ENCODE measurements at regions of chr5 and their contacts with region 1.

Region 1: GRCh38 chr5:50286902-50287301 is 154.2 kb downstream of the EMB start:
- DNase-seq: no peak
- ATAC-seq: no peak
- H3K4me3 ChIP-seq: no peak overlapping the region
- H3K27ac ChIP-seq: no peak overlapping the region
- H3K4me1 ChIP-seq: no peaks in the 10 kb centered on the region
- H3K27me3 ChIP-seq: no peaks in the 10 kb centered on the region
- CTCF ChIP-seq: no peak
- POLR2A ChIP-seq: no peak
- RAD21 ChIP-seq: no peak

Region 2: DNA sequence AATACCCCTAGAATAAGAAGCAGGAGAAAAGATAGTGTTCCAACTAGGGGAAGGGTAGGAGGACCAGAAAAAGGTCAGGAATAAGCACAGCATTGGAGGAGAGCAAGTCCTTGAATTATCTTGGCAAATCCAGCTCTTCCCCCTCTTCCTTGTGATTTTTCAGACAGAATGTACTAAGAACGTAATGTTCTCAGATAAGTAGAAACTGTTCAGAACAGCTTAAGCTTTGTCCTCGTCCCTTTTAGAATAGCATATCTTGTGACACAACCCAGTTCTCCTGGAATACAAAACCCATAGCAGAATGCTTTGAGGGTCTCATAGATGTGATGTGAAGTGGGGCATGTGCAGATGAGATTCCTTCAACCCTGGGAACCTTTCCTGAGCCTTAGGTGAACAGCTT is 56.8 kb after region 1 on chr5:
- CTCF ChIA-PET with region 1: no interaction called
- POLR2A ChIA-PET with region 1: no interaction called
- dilution Hi-C with region 1: no loop called
- in situ Hi-C with region 1: no loop called
- intact Hi-C with region 1: loop called (anchors 10 kb)
- DNase-seq: no peak
- ATAC-seq: no peak
- H3K4me3 ChIP-seq: no peak overlapping the region
- H3K27ac ChIP-seq: no peak overlapping the region
- H3K4me1 ChIP-seq: no peaks in the 10 kb centered on the region
- H3K27me3 ChIP-seq: no peaks in the 10 kb centered on the region
- CTCF ChIP-seq: no peak
- POLR2A ChIP-seq: no peak
- RAD21 ChIP-seq: no peak

Region 3: GRCh38 chr5:50751064-50751657 is 464.3 kb after region 1 on chr5:
- CTCF ChIA-PET with region 1: no interaction called
- POLR2A ChIA-PET with region 1: no interaction called
- dilution Hi-C with region 1: no loop called
- in situ Hi-C with region 1: no loop called
- intact Hi-C with region 1: no loop called
- DNase-seq: peak; percentile 55
- ATAC-seq: peak; percentile 86
- H3K4me3 ChIP-seq: no peak overlapping the region
- H3K27ac ChIP-seq: no peak overlapping the region
- H3K4me1 ChIP-seq: no peaks in the 10 kb centered on the region
- H3K27me3 ChIP-seq: no peaks in the 10 kb centered on the region
- CTCF ChIP-seq: peak; percentile 79
- POLR2A ChIP-seq: no peak
- RAD21 ChIP-seq: peak; percentile 84

Region 4: DNA sequence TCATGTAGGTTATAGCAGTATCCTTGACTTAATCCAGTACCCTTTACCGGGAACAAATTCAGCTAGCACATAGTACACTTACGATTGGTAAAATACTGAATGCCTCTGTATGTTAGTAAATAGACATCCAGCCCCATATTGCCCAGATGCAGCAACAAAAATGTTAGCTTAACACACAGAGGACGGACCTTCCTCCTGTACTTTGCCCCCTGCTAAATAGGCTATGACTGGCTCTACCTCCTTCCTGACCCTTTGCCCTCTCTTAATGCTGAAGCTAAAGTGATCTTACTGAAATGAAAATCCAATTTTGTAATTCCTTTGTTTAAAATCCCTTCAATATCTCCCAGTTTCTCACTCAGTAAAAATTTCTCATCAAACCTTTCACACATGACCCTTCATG is 562.7 kb after region 1 on chr5:
- CTCF ChIA-PET with region 1: no interaction called
- POLR2A ChIA-PET with region 1: no interaction called
- dilution Hi-C with region 1: no loop called
- in situ Hi-C with region 1: no loop called
- intact Hi-C with region 1: no loop called
- DNase-seq: no peak
- ATAC-seq: no peak
- H3K4me3 ChIP-seq: no peak overlapping the region
- H3K27ac ChIP-seq: no peak overlapping the region
- H3K4me1 ChIP-seq: no peaks in the 10 kb centered on the region
- H3K27me3 ChIP-seq: no peaks in the 10 kb centered on the region
- CTCF ChIP-seq: no peak
- POLR2A ChIP-seq: no peak
- RAD21 ChIP-seq: no peak